ENCODE measurements at regions of chr17 and their contacts with region 1.

Region 1: GRCh38 chr17:75131280-75132017 is at the start of gene NT5C:
- DNase-seq: peak; percentile 83
- ATAC-seq: peak; percentile 83
- H3K4me3 Mint-ChIP-seq: peak within 1 kb of the TSS; percentile 88
- H3K27ac Mint-ChIP-seq: peak within 1 kb of the TSS; percentile 92
- H3K4me1 Mint-ChIP-seq: peaks cover 28% of the 10 kb centered on the region
- H3K27me3 Mint-ChIP-seq: no peaks in the 10 kb centered on the region
- CTCF ChIP-seq: no peak
- total RNA-seq, gene NT5C: 95.0 and 98.2 TPM in 2 replicates

Region 2: DNA sequence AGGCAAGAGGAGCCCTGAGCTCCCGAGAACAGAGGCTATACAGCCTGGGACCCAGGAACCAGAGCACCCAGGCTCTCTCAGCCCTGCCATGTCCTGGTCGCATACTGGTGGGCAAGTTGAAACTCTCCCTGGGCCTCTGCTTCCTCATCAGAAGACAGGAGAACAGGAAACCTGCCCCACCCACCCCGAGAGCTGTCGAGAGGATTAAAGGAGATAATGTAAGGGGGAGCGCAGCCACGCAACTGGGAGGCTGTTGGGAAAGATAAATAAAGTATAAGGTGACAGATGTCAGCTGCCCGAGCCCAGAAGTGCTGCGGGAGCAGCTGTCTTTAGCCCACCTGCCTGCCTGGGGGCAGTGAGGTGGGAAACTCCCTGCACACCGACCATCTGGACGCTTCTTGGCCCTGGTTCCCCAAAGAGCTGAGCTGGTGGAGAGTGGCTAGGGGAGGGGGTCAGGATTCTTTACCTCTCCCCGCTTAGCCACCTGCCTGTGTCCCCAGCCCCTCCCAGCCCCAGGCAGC is 798.6 kb before region 1 on chr17:
- CTCF ChIA-PET with region 1: no interaction called
- POLR2A ChIA-PET with region 1: no interaction called
- intact Hi-C with region 1: no loop called
- DNase-seq: no peak
- ATAC-seq: no peak
- H3K4me3 Mint-ChIP-seq: no peak overlapping the region
- H3K27ac Mint-ChIP-seq: no peak overlapping the region
- H3K4me1 Mint-ChIP-seq: no peaks in the 10 kb centered on the region
- H3K27me3 Mint-ChIP-seq: peaks cover 16% of the 10 kb centered on the region
- CTCF ChIP-seq: no peak

Region 3: GRCh38 chr17:75034236-75034908 is 97.1 kb before region 1 on chr17:
- CTCF ChIA-PET with region 1: no interaction called
- POLR2A ChIA-PET with region 1: interaction called, 12 read pairs
- intact Hi-C with region 1: no loop called
- DNase-seq: peak; percentile 76
- ATAC-seq: peak; percentile 72
- H3K4me3 Mint-ChIP-seq: peak overlapping the region; percentile 91
- H3K27ac Mint-ChIP-seq: peak overlapping the region; percentile 89
- H3K4me1 Mint-ChIP-seq: peaks cover 34% of the 10 kb centered on the region
- H3K27me3 Mint-ChIP-seq: peaks cover 1% of the 10 kb centered on the region
- CTCF ChIP-seq: no peak

Region 4: GRCh38 chr17:75116737-75117136 is 14.7 kb before region 1 on chr17:
- CTCF ChIA-PET with region 1: interaction called, 116 read pairs
- POLR2A ChIA-PET with region 1: interaction called, 292 read pairs
- intact Hi-C with region 1: loop called (anchors 1 kb)
- DNase-seq: no peak
- ATAC-seq: no peak
- H3K4me3 Mint-ChIP-seq: no peak overlapping the region
- H3K27ac Mint-ChIP-seq: no peak overlapping the region
- H3K4me1 Mint-ChIP-seq: peaks cover 64% of the 10 kb centered on the region
- H3K27me3 Mint-ChIP-seq: no peaks in the 10 kb centered on the region
- CTCF ChIP-seq: no peak

Region 5: GRCh38 chr17:75173526-75173925 is 42.1 kb after region 1 on chr17:
- CTCF ChIA-PET with region 1: interaction called, 7 read pairs
- POLR2A ChIA-PET with region 1: interaction called, 26 read pairs
- intact Hi-C with region 1: no loop called
- DNase-seq: no peak
- ATAC-seq: no peak
- H3K4me3 Mint-ChIP-seq: no peak overlapping the region
- H3K27ac Mint-ChIP-seq: peak overlapping the region; percentile 46
- H3K4me1 Mint-ChIP-seq: peaks cover 16% of the 10 kb centered on the region
- H3K27me3 Mint-ChIP-seq: no peaks in the 10 kb centered on the region
- CTCF ChIP-seq: no peak